ENCODE measurements at regions of chrX and their contacts with region 1.

Region 1: DNA sequence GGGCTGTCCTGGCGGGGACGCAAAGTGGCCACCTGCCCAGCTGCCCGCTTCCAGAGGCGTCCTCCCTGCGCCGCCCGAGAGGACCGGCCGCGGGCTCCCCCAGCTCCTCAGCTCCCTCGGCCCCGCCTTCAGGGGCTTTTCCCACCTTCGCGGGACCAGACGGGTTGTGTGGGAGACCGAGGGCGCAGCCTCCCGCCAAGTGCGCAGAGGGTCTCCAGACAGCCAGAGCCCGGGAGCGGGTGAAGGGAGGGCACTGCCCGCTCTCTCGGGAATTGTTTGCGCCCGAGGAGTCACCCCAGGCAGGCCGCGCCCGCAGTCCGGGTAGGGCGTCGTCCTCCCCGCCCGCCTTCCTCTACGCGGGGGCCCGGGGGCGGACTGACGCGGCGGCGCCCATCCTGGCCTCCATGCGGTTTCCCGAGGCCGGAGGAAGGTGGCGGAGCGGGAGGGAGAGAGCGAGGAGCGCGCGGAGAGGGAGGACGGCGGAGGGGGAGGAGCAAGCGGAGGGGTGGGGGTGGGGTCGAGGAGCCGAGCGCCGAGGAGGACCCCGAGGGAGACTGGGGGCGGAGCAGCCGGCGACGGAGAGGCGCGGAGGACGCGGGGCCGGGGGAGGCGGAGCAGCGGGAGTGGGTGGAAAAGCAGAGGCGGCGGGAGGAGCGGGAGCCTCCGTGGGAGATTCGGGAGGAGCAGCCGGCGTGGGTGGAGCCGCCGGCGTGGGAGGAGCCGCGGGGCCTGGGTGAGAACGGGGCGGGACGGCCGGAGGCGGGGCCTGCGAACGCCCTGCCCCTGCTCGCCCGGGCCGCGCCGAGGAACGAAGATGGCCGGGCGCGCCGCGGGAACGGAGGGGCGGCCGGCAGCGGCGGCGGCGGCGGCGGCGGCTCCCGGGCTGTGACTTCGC is 47.6 kb downstream of the CLDN34 start:
- DNase-seq: peak; percentile 96
- H3K4me3 ChIP-seq: peak overlapping the region; percentile 43 to 61 (median 58)
- H3K27ac ChIP-seq: peak overlapping the region; percentile 89 to 94 (median 91)
- H3K4me1 ChIP-seq: peaks cover 0 to 43% (median 17%) of the 10 kb centered on the region in 4 donors
- H3K27me3 ChIP-seq: no peaks in the 10 kb centered on the region
- CTCF ChIP-seq: no peak
- EP300 ChIP-seq: no peak
- POLR2A ChIP-seq: no peak

Region 2: GRCh38 chrX:9530848-9531274 is 483.8 kb before region 1 on chrX:
- intact Hi-C with region 1: no loop called
- DNase-seq: peak; percentile 78
- H3K4me3 ChIP-seq: no peak overlapping the region
- H3K27ac ChIP-seq: peak overlapping the region in 1 of 4 donors; percentile 29
- H3K4me1 ChIP-seq: peaks cover 0 to 47% (median 28%) of the 10 kb centered on the region in 4 donors
- H3K27me3 ChIP-seq: no peaks in the 10 kb centered on the region
- CTCF ChIP-seq: no peak
- EP300 ChIP-seq: no peak
- POLR2A ChIP-seq: no peak

Region 3: GRCh38 chrX:10083809-10084208 is 69.1 kb after region 1 on chrX:
- intact Hi-C with region 1: loop called (anchors 1 kb)
- DNase-seq: no peak
- H3K4me3 ChIP-seq: no peak overlapping the region
- H3K27ac ChIP-seq: peak overlapping the region; percentile 77 to 82 (median 79)
- H3K4me1 ChIP-seq: peaks cover 0 to 59% (median 39%) of the 10 kb centered on the region in 4 donors
- H3K27me3 ChIP-seq: no peaks in the 10 kb centered on the region
- CTCF ChIP-seq: no peak
- EP300 ChIP-seq: peak in 1 of 4 donors; percentile 8
- POLR2A ChIP-seq: no peak

Region 4: DNA sequence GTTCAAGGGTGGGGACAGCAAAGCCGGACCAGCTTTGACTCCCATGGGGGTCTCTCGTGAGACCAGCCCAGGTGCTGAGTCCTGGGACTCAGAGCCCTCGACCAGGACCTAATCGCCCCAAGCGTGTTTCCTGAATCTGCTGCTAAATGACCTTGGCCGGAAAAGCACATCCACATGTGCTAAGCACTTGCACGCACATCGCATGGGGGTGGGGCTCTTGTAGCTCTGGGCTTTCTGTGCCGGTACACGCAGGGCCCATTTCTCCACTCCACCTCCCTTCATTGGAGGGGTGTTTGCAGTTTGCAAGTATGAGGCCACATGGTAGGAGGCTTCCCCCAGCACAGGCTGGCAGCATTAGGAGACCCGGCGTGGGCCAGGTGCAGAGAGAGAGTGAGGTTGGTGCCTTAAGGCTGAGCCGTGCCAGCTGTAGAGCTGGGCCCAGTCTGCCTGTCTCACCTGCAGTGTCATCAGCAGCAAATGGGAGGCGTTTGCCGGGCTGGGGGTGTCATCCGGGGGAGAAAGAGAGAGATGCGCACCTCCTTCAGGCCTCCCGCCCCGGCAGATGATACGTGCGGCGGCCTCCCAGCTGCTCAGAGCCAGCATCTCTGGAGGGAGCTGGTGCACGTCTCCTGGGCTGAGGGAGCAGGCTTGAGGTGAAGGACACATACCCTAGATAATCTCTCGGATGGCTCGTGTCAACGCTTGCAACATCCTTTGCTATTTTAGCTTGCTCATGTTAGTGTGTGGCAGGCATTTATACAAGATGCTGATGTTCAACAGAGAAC is 96.8 kb after region 1 on chrX:
- intact Hi-C with region 1: loop called (anchors 5 kb)
- DNase-seq: peak; percentile 75
- H3K4me3 ChIP-seq: no peak overlapping the region
- H3K27ac ChIP-seq: peak overlapping the region; percentile 53 to 76 (median 68)
- H3K4me1 ChIP-seq: peaks cover 0 to 59% (median 44%) of the 10 kb centered on the region in 4 donors
- H3K27me3 ChIP-seq: no peaks in the 10 kb centered on the region
- CTCF ChIP-seq: no peak
- EP300 ChIP-seq: peak in 1 of 4 donors; percentile 66
- POLR2A ChIP-seq: no peak

Measured in sigmoid colon (tissue), 7 donors.